ENCODE measurements at regions of chr14 and their contacts with region 1.

Region 1: DNA sequence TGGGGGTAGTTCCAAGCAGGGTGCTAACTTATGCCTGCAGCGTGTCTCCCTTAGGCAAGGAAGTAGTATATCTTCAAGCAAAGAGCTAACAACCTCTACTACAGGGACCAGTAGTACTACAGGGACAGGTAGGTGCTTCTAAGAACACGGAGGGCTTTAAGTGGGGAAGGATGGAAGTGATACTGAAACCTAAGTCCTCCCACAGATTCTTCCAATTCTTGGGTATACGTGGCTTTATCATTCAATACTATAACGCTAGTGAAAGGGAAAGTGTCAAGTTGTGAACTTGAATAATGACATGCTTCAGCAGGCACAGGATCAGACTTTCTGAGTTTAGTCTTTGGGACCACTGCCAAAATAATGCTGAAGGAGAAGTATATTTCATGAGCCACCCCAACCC is 241.7 kb downstream of the CEP128 start:
- DNase-seq: no peak
- ATAC-seq: no peak

Region 2: DNA sequence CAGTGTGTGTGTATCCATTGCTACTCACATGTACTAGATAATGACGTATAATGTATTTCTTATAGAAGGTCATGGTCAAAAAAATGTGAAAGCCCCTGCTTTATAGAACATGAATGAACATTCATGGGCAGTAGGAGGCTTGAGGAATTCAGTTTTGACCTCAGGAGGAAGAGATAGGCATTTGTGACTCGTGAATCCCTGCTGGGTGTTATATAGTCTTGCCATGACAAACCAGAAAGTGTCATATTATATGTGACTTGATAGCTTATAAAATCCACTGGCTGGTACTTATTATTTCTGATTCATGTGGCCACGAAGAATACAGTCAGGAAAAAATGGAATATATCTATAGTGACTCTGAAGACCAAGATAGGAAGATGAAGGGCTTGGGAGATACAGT is 45.9 kb before region 1 on chr14:
- intact Hi-C with region 1: no loop called
- DNase-seq: no peak
- ATAC-seq: no peak

Region 3: DNA sequence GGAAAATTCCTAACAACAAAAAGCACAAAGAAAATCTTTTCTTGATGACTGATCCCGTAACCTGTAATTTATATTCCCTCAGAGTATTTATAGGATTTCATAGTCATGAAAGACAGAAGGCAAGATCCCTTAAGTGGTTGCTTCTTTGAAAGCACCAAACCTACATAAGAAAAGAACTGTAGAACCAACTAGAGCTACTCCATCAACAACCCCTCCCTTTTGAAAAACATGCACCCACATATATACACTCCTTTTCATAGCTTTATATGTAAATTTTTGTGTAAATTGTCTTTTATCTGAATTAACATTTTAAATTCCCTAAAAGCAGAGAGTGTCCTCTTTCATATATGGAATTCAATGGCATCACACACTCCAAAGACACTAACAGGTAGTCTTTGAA is 26.4 kb after region 1 on chr14:
- intact Hi-C with region 1: loop called (anchors 1 kb)
- DNase-seq: no peak
- ATAC-seq: no peak

Region 4: GRCh38 chr14:80776657-80777056 is 76.8 kb after region 1 on chr14:
- intact Hi-C with region 1: no loop called
- DNase-seq: no peak
- ATAC-seq: no peak

Measured in sciatic nerve (tissue), 2 donors.